CD4-positive, alpha-beta T cell (primary cell): ENCODE measurements at regions of chr6 and their contacts with region 1.

Region 1: GRCh38 chr6:13454286-13455221 is 32.8 kb downstream of the GFOD1 start:
- DNase-seq: peak; percentile 25 to 86 (median 58)
- ATAC-seq: peak; percentile 81
- H3K4me3 ChIP-seq: peak overlapping the region; percentile 12
- H3K4me3 Mint-ChIP-seq: peak overlapping the region; percentile 60
- H3K27ac ChIP-seq: peak overlapping the region; percentile 1 to 6
- H3K27ac Mint-ChIP-seq: peak overlapping the region; percentile 88
- H3K4me1 ChIP-seq: peaks cover 21% of the 10 kb centered on the region
- H3K4me1 Mint-ChIP-seq: peaks cover 27% of the 10 kb centered on the region
- H3K27me3 ChIP-seq: no peaks in the 10 kb centered on the region
- H3K27me3 Mint-ChIP-seq: no peaks in the 10 kb centered on the region
- CTCF ChIP-seq: peak; percentile 57

Region 2: GRCh38 chr6:13427801-13428582 is 26.6 kb before region 1 on chr6:
- CTCF ChIA-PET with region 1: no interaction called
- POLR2A ChIA-PET with region 1: interaction called, 3 read pairs
- intact Hi-C with region 1: loop called in 1 of 2 experiments (anchors 1 kb)
- DNase-seq: peak; percentile 12 to 85 (median 46)
- ATAC-seq: peak; percentile 80
- H3K4me3 ChIP-seq: peak overlapping the region; percentile 42
- H3K4me3 Mint-ChIP-seq: peak overlapping the region; percentile 78
- H3K27ac ChIP-seq: peak overlapping the region in 1 of 2 donors; percentile 59
- H3K27ac Mint-ChIP-seq: peak overlapping the region; percentile 71
- H3K4me1 ChIP-seq: peaks cover 42% of the 10 kb centered on the region
- H3K4me1 Mint-ChIP-seq: peaks cover 53% of the 10 kb centered on the region
- H3K27me3 ChIP-seq: no peaks in the 10 kb centered on the region
- H3K27me3 Mint-ChIP-seq: no peaks in the 10 kb centered on the region
- CTCF ChIP-seq: peak; percentile 40

Region 3: GRCh38 chr6:13487122-13488014 is 32.8 kb after region 1 on chr6 and contains the start of gene GFOD1:
- CTCF ChIA-PET with region 1: interaction called, 3 read pairs
- POLR2A ChIA-PET with region 1: interaction called, 3 read pairs
- intact Hi-C with region 1: loop called in 1 of 2 experiments (anchors 2 kb)
- DNase-seq: peak; percentile 28 to 86 (median 61)
- ATAC-seq: peak; percentile 76
- H3K4me3 ChIP-seq: peak within 1 kb of the TSS; percentile 67
- H3K4me3 Mint-ChIP-seq: peak within 1 kb of the TSS; percentile 94
- H3K27ac ChIP-seq: no peak within 1 kb of the TSS
- H3K27ac Mint-ChIP-seq: peak within 1 kb of the TSS; percentile 66
- H3K4me1 ChIP-seq: peaks cover 25% of the 10 kb centered on the region
- H3K4me1 Mint-ChIP-seq: peaks cover 29% of the 10 kb centered on the region
- H3K27me3 ChIP-seq: peaks cover 0 to 5% of the 10 kb centered on the region in 2 experiments
- H3K27me3 Mint-ChIP-seq: peaks cover 9% of the 10 kb centered on the region
- CTCF ChIP-seq: no peak
- total RNA-seq, gene GFOD1: 1.3 to 2.0 TPM

Region 4: DNA sequence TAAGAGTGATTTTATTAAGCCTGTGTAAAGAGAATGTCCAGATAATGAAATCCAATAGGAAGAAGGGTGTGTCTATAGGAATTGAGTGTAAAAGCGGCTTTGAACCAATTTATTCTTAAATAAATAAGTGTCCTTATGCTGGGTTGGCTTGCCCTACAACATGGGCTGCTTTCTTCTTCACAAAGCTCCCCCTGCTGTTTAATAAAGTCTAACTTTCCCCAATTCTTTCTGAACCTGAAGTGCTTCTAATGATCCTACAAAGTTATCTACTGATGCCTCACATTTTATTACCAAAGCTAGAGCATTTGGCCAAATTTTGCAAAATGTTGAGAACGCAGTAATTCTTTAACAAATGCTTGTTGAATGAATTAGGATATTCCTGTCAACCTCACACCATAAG is 83.5 kb after region 1 on chr6:
- CTCF ChIA-PET with region 1: no interaction called
- POLR2A ChIA-PET with region 1: no interaction called
- intact Hi-C with region 1: loop called (anchors 2 kb)
- DNase-seq: peak in 4 of 14 experiments; percentile 10 to 55 (median 49)
- ATAC-seq: no peak
- H3K4me3 ChIP-seq: no peak overlapping the region
- H3K4me3 Mint-ChIP-seq: no peak overlapping the region
- H3K27ac ChIP-seq: no peak overlapping the region
- H3K27ac Mint-ChIP-seq: no peak overlapping the region
- H3K4me1 ChIP-seq: no peaks in the 10 kb centered on the region
- H3K4me1 Mint-ChIP-seq: no peaks in the 10 kb centered on the region
- H3K27me3 ChIP-seq: no peaks in the 10 kb centered on the region
- H3K27me3 Mint-ChIP-seq: no peaks in the 10 kb centered on the region
- CTCF ChIP-seq: peak; percentile 60

Region 5: GRCh38 chr6:13767121-13767808 is 312.7 kb after region 1 on chr6:
- CTCF ChIA-PET with region 1: no interaction called
- POLR2A ChIA-PET with region 1: no interaction called
- intact Hi-C with region 1: loop called in 1 of 2 experiments (anchors 5 kb)
- DNase-seq: peak; percentile 12 to 67 (median 38)
- ATAC-seq: peak; percentile 51
- H3K4me3 ChIP-seq: peak overlapping the region; percentile 24
- H3K4me3 Mint-ChIP-seq: peak overlapping the region; percentile 44
- H3K27ac ChIP-seq: no peak overlapping the region
- H3K27ac Mint-ChIP-seq: no peak overlapping the region
- H3K4me1 ChIP-seq: peaks cover 26% of the 10 kb centered on the region
- H3K4me1 Mint-ChIP-seq: peaks cover 38% of the 10 kb centered on the region
- H3K27me3 ChIP-seq: no peaks in the 10 kb centered on the region
- H3K27me3 Mint-ChIP-seq: no peaks in the 10 kb centered on the region
- CTCF ChIP-seq: peak; percentile 55